ENCODE measurements at regions of chr10 and their contacts with region 1.

Region 1: GRCh38 chr10:50624866-50625692 is 1.3 kb upstream of the SGMS1 start:
- DNase-seq: peak; percentile 35 to 88 (median 54)
- ATAC-seq: peak; percentile 24
- H3K4me3 ChIP-seq: peak overlapping the region; percentile 71
- H3K4me3 Mint-ChIP-seq: peak overlapping the region; percentile 99
- H3K27ac ChIP-seq: peak overlapping the region; percentile 98
- H3K27ac Mint-ChIP-seq: peak overlapping the region; percentile 97
- H3K4me1 ChIP-seq: peaks cover 29% of the 10 kb centered on the region
- H3K4me1 Mint-ChIP-seq: peaks cover 35% of the 10 kb centered on the region
- H3K27me3 ChIP-seq: no peaks in the 10 kb centered on the region
- H3K27me3 Mint-ChIP-seq: no peaks in the 10 kb centered on the region
- CTCF ChIP-seq: peak; percentile 52

Region 2: GRCh38 chr10:49538381-49539319 is 1086.4 kb before region 1 on chr10 and contains the start of gene ERCC6:
- CTCF ChIA-PET with region 1: no interaction called
- POLR2A ChIA-PET with region 1: interaction called, 5 read pairs
- intact Hi-C with region 1: loop called in 1 of 2 experiments (anchors 10 kb)
- DNase-seq: peak; percentile 92 to 99 (median 96)
- ATAC-seq: peak; percentile 96
- H3K4me3 ChIP-seq: peak within 1 kb of the TSS; percentile 77
- H3K4me3 Mint-ChIP-seq: peak within 1 kb of the TSS; percentile 95
- H3K27ac ChIP-seq: peak within 1 kb of the TSS; percentile 76 to 79
- H3K27ac Mint-ChIP-seq: peak within 1 kb of the TSS; percentile 82
- H3K4me1 ChIP-seq: peaks cover 23% of the 10 kb centered on the region
- H3K4me1 Mint-ChIP-seq: peaks cover 48% of the 10 kb centered on the region
- H3K27me3 ChIP-seq: peaks cover 0 to 5% of the 10 kb centered on the region in 2 experiments
- H3K27me3 Mint-ChIP-seq: peaks cover 23% of the 10 kb centered on the region
- CTCF ChIP-seq: no peak
- total RNA-seq, gene ERCC6: 33.3 to 39.0 TPM

Region 3: GRCh38 chr10:50511492-50512213 is 113.4 kb before region 1 on chr10:
- CTCF ChIA-PET with region 1: no interaction called
- POLR2A ChIA-PET with region 1: interaction called, 23 read pairs
- intact Hi-C with region 1: no loop called
- DNase-seq: peak in 2 of 14 experiments; percentile 9 to 16
- ATAC-seq: peak; percentile 46
- H3K4me3 ChIP-seq: no peak overlapping the region
- H3K4me3 Mint-ChIP-seq: peak overlapping the region; percentile 5
- H3K27ac ChIP-seq: no peak overlapping the region
- H3K27ac Mint-ChIP-seq: peak overlapping the region; percentile 18
- H3K4me1 ChIP-seq: peaks cover 42% of the 10 kb centered on the region
- H3K4me1 Mint-ChIP-seq: peaks cover 95% of the 10 kb centered on the region
- H3K27me3 ChIP-seq: no peaks in the 10 kb centered on the region
- H3K27me3 Mint-ChIP-seq: no peaks in the 10 kb centered on the region
- CTCF ChIP-seq: no peak

Region 4: DNA sequence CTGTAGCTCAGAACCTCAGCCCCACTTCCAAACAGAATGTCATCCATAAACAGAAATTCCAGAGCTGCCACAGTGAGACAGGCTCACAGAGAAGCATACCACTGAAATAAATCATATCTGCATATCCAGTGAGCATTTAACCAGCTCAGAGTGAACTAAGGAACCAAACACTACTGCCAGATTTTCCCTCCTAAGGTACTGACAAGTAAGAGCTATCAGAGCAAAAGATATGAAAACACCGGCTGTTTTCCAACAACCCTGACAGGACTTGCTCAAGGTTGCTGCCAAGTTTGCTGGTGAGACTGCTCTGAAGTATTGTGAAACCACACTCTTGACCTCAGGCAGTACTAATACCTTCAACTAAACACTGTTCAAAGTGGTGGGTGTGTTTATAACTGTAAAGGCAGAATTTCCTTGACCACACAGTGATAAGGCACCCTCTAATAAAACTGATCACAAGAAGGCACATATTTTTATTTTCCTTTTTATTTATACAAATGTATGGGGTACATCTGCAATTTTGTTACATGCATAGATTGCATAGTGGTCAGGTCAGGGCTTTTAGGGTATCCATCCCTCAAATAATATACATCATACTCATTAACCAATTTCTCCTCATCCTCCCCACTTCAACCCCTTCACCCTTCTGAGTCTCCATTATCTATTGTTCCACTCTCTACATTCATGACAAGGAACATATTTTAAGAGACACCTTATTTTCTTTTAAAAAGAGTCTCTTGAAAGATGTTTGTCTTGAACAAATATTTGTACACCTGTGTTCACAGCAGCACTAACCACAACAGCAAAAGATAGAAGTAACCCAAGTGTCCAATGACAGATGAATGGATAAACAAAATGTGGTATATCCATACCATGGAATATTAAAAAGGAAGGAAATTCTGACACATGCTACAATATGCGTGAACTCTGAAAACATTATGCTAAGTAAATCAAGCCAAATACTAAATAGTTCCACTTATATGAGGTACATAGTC is 19.5 kb before region 1 on chr10:
- CTCF ChIA-PET with region 1: no interaction called
- POLR2A ChIA-PET with region 1: interaction called, 14 read pairs
- intact Hi-C with region 1: loop called in 1 of 2 experiments (anchors 1 kb)
- DNase-seq: peak in 2 of 14 experiments; percentile 17 to 26
- ATAC-seq: no peak
- H3K4me3 ChIP-seq: no peak overlapping the region
- H3K4me3 Mint-ChIP-seq: peak overlapping the region; percentile 17
- H3K27ac ChIP-seq: no peak overlapping the region
- H3K27ac Mint-ChIP-seq: peak overlapping the region; percentile 75
- H3K4me1 ChIP-seq: peaks cover 25% of the 10 kb centered on the region
- H3K4me1 Mint-ChIP-seq: peaks cover 85% of the 10 kb centered on the region
- H3K27me3 ChIP-seq: no peaks in the 10 kb centered on the region
- H3K27me3 Mint-ChIP-seq: no peaks in the 10 kb centered on the region
- CTCF ChIP-seq: no peak

Region 5: GRCh38 chr10:50653142-50653541 is 28.1 kb after region 1 on chr10:
- CTCF ChIA-PET with region 1: no interaction called
- POLR2A ChIA-PET with region 1: interaction called, 7 read pairs
- intact Hi-C with region 1: loop called in 1 of 2 experiments (anchors 1 kb)
- DNase-seq: peak in 8 of 14 experiments; percentile 6 to 59 (median 39)
- ATAC-seq: peak; percentile 69
- H3K4me3 ChIP-seq: no peak overlapping the region
- H3K4me3 Mint-ChIP-seq: no peak overlapping the region
- H3K27ac ChIP-seq: no peak overlapping the region
- H3K27ac Mint-ChIP-seq: no peak overlapping the region
- H3K4me1 ChIP-seq: peaks cover 12% of the 10 kb centered on the region
- H3K4me1 Mint-ChIP-seq: peaks cover 18% of the 10 kb centered on the region
- H3K27me3 ChIP-seq: no peaks in the 10 kb centered on the region
- H3K27me3 Mint-ChIP-seq: no peaks in the 10 kb centered on the region
- CTCF ChIP-seq: peak; percentile 63

Region 6: DNA sequence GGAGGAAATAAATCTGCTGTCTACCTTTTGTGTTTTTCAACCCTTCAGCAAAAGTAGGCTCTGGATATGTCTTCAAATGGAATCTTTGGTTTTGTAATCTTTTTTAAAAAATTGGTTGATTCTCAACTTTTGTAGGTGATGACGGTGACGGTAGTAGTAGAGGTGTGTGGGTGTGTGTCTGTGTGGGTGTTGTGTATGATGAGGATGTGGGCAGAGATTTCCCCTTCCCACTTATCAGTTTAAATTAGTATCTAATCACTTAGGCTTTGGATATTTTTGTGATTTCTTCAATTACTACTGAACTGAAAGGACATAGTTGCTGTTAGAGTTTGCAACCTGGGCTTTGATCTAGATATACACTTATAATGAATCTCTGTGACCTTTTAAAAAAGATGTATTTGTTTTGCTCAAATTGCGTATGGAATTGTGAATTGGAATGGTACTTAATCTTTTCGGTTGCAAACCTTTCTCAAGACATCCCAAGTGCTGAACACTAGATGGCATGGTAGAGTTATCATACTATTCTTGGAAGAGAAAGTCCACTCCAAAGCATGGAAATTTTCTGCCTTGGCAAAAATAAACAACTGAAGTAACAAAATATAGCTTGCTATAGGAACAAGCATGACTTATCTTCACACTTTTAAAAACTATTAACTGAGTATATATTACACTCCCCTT is 312.3 kb after region 1 on chr10:
- CTCF ChIA-PET with region 1: no interaction called
- POLR2A ChIA-PET with region 1: no interaction called
- intact Hi-C with region 1: no loop called
- DNase-seq: no peak
- ATAC-seq: no peak
- H3K4me3 ChIP-seq: no peak overlapping the region
- H3K4me3 Mint-ChIP-seq: no peak overlapping the region
- H3K27ac ChIP-seq: no peak overlapping the region
- H3K27ac Mint-ChIP-seq: no peak overlapping the region
- H3K4me1 ChIP-seq: no peaks in the 10 kb centered on the region
- H3K4me1 Mint-ChIP-seq: no peaks in the 10 kb centered on the region
- H3K27me3 ChIP-seq: no peaks in the 10 kb centered on the region
- H3K27me3 Mint-ChIP-seq: peaks cover 40% of the 10 kb centered on the region
- CTCF ChIP-seq: peak; percentile 19

Region 7: GRCh38 chr10:50951365-50951764 is 326.3 kb after region 1 on chr10:
- CTCF ChIA-PET with region 1: no interaction called
- POLR2A ChIA-PET with region 1: no interaction called
- intact Hi-C with region 1: no loop called
- DNase-seq: no peak
- ATAC-seq: no peak
- H3K4me3 ChIP-seq: no peak overlapping the region
- H3K4me3 Mint-ChIP-seq: no peak overlapping the region
- H3K27ac ChIP-seq: no peak overlapping the region
- H3K27ac Mint-ChIP-seq: no peak overlapping the region
- H3K4me1 ChIP-seq: no peaks in the 10 kb centered on the region
- H3K4me1 Mint-ChIP-seq: no peaks in the 10 kb centered on the region
- H3K27me3 ChIP-seq: no peaks in the 10 kb centered on the region
- H3K27me3 Mint-ChIP-seq: no peaks in the 10 kb centered on the region
- CTCF ChIP-seq: no peak

Region 8: GRCh38 chr10:51162002-51162401 is 536.9 kb after region 1 on chr10:
- CTCF ChIA-PET with region 1: no interaction called
- POLR2A ChIA-PET with region 1: no interaction called
- intact Hi-C with region 1: no loop called
- DNase-seq: no peak
- ATAC-seq: no peak
- H3K4me3 ChIP-seq: no peak overlapping the region
- H3K4me3 Mint-ChIP-seq: no peak overlapping the region
- H3K27ac ChIP-seq: no peak overlapping the region
- H3K27ac Mint-ChIP-seq: no peak overlapping the region
- H3K4me1 ChIP-seq: no peaks in the 10 kb centered on the region
- H3K4me1 Mint-ChIP-seq: no peaks in the 10 kb centered on the region
- H3K27me3 ChIP-seq: no peaks in the 10 kb centered on the region
- H3K27me3 Mint-ChIP-seq: no peaks in the 10 kb centered on the region
- CTCF ChIP-seq: no peak

Region 9: DNA sequence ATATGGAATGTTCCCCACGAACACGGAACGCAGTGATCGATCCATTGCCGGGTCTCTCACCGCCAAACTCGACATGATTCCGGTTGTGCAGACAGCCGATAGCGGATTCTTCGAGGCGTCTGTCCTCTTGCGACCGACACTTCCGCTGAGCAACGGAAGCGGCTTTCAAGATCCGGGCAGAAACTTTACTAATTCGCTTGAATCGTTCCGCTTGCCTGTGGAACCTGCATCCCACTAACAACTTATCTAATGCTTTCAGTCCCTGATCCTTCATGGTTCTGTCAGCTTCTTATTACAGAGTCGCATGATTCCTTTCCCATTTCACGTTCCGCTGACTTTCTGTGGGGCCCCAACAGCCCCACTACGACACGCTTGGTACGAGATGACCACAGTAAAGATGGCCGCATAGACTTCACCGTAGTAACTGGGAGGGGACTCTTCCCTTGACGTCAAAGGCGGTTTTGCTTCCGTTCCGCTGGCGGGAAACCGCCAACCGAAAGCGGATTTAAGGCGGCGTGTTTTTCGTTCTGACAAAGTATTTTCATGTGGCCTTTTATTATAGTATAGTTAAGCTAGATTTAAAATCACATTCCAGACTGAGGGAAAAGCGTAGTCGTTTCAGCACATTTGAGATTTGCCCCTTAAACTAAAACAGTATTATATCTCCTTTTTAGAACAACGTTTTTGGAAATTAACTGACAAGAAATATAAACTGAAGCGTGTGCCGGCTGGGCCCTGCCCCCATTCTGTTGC is 1074.6 kb after region 1 on chr10 and contains the start of gene CSTF2T:
- CTCF ChIA-PET with region 1: no interaction called
- POLR2A ChIA-PET with region 1: interaction called, 5 read pairs
- intact Hi-C with region 1: loop called (anchors 10 kb)
- DNase-seq: peak; percentile 82 to 96 (median 89)
- ATAC-seq: peak; percentile 88
- H3K4me3 ChIP-seq: peak within 1 kb of the TSS; percentile 93
- H3K4me3 Mint-ChIP-seq: peak within 1 kb of the TSS; percentile 98
- H3K27ac ChIP-seq: peak within 1 kb of the TSS; percentile 95 to 98
- H3K27ac Mint-ChIP-seq: peak within 1 kb of the TSS; percentile 99
- H3K4me1 ChIP-seq: peaks cover 25% of the 10 kb centered on the region
- H3K4me1 Mint-ChIP-seq: peaks cover 51% of the 10 kb centered on the region
- H3K27me3 ChIP-seq: no peaks in the 10 kb centered on the region
- H3K27me3 Mint-ChIP-seq: no peaks in the 10 kb centered on the region
- CTCF ChIP-seq: no peak
- total RNA-seq, gene CSTF2T: 28.4 to 29.6 TPM

Measured in CD4-positive, alpha-beta T cell (primary cell).